ENCODE measurements at regions of chr11 and their contacts with region 1.

Region 1: DNA sequence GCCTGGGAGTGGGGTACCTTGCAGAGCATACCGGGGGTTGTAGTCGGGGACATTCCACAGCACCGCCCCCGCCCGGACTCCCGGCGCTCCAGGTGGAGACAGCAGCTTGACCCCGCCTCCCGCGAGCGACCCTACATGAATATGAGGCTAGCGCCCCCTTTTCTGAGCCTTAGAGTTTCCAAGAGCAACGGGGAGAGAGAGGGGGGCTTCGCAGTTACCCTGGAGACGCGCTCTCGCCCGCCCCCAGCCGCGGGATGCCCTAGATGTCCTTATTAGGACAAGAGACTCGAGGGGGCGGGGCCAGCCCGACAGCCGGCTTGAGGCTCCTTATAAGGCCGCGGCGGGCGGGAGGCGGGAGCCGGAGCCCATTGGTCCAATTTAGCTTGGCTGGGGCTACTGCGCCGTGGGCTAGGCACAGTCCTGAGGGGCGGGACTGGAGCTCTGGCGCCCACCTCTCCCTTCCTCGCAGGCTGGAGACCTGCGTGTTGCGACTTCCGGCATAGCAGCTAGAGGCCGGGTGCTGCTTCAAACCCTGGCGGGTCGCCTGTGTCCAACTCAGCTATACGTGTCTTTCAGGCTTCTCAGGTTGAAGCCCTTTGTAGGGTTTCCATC is 927 bp upstream of the MUS81 start:
- H3K4me3 ChIP-seq: peak overlapping the region; percentile 94
- H3K27ac ChIP-seq: peak overlapping the region; percentile 92
- H3K4me1 ChIP-seq: peaks cover 4% of the 10 kb centered on the region; the same call in 1 of the 2 replicates
- CTCF ChIP-seq: peak; percentile 69; the same call in 1 of the 2 replicates

Region 2: DNA sequence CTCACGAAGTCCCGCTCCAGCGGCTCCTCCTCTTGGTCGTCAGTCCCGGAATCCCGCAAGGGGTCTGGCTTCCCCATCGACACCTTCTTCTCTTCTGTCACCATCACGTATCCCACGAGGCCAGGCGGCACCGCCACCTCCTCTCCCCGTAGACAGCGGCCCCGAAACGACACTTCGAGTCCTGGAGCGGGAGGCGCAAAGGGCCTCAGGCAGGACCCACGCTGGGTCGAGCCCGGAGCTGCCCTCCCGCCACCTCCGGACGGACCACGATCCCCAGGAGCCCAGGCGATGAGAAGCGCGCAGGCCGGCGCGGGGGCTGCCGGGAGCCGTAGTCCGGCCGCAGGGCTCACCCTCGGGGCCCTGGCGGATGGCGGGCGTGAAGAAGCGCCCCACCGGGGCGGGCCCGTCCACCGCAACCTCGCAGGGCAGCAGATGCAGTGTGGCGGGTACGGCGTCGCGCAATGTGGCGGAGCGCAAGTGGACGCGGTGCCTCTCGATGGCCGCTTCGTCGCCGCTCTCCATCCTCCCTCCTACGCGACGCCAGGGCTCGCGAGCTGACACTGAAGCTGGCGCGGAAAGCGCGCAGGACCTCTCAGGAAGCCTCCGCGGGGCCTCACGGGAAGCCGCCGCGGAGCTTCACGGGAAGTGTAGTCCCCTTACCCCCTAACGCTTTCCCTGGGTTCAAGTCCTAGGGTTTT is 138.9 kb before region 1 on chr11 and contains the start of gene RNASEH2C:
- CTCF ChIA-PET with region 1: interaction called, 5 read pairs
- POLR2A ChIA-PET with region 1: interaction called, 21 read pairs
- H3K4me3 ChIP-seq: peak within 1 kb of the TSS; percentile 90
- H3K27ac ChIP-seq: peak within 1 kb of the TSS; percentile 76
- H3K4me1 ChIP-seq: no peaks in the 10 kb centered on the region
- CTCF ChIP-seq: no peak

Region 3: DNA sequence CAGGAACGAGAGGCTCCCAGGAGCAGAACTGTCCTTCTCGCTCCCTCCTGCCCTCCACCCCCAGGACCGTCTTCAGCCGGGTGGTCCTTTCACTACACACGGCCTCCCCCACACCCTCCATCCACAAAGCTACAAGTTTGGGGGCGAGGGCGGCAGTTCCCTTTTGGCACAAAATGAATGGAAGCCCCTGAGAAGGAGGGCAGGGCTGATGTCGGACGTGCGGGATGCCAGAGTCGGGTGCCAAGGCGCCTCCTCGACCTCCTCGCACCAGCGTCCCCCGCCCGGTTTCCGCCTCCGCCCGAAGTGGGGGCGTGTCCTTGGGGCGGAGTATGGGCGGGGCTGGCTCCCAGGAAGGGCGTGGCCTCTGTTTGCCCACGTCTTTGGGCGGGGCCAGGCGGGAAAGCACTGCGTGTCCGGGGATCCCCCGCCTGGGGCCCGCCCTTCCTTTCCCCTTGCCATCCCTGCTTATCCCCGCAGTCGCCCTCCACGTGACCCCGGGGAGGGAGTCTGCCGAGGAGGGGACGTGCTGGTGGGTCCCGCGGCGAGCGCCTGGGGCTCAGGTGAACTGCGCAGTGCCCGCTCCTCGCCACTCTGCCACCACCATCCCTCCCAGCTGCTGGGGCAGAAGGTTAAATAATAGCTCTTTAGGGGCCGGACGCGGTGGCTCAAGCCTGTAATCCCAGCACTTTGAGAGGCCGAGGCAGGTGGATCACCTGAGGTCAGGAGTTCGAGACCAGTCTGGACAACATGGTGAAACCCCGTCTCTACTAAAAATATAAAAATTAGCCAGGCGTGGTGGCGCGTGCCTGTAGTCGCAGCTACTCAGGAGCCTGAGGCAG is 14.2 kb after region 1 on chr11:
- CTCF ChIA-PET with region 1: interaction called, 37 read pairs
- POLR2A ChIA-PET with region 1: interaction called, 111 read pairs
- H3K4me3 ChIP-seq: peak overlapping the region; percentile 44
- H3K27ac ChIP-seq: no peak overlapping the region
- H3K4me1 ChIP-seq: no peaks in the 10 kb centered on the region
- CTCF ChIP-seq: no peak

Measured in HEK293 (cell line).